A549 (cell line): ENCODE measurements at regions of chr15 and their contacts with region 1.

Region 1: DNA sequence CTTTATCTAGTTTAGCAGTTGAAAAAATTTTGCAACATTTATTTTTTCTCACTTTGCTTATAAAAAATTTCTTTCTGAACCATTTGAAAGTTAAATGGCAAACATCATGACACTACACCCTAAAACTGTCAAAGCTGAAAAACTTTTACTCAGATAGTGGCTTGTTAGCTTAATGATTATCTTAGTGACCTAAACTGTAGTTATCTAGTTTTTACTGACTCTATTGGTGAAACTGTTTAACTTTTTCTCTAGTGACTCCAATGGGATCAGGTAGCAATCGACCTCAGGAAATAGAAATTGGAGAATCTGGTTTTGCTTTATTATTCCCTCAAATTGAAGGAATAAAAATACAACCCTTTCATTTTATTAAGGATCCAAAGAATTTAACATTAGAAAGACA is 13.3 kb downstream of the FBXO22 start:
- DNase-seq: no peak
- ATAC-seq: no peak
- H3K4me3 ChIP-seq: no peak overlapping the region
- H3K27ac ChIP-seq: no peak overlapping the region
- H3K4me1 ChIP-seq: peaks cover 4% of the 10 kb centered on the region; the same call in 2 of the 3 replicates
- CTCF ChIP-seq: no peak
- EP300 ChIP-seq: no peak
- POLR2A ChIP-seq: no peak
- RAD21 ChIP-seq: no peak

Region 2: GRCh38 chr15:75928680-75929608 is 12.0 kb after region 1 on chr15:
- CTCF ChIA-PET with region 1: interaction called, 55 read pairs
- POLR2A ChIA-PET with region 1: no interaction called
- DNase-seq: peak; percentile 38 to 75
- ATAC-seq: peak; percentile 91 to 94
- H3K4me3 ChIP-seq: no peak overlapping the region
- H3K27ac ChIP-seq: no peak overlapping the region
- H3K4me1 ChIP-seq: peaks cover 9% of the 10 kb centered on the region; the same call in 2 of the 3 replicates
- CTCF ChIP-seq: peak; percentile 64
- EP300 ChIP-seq: no peak
- POLR2A ChIP-seq: no peak
- RAD21 ChIP-seq: peak; percentile 66 to 70

Region 3: DNA sequence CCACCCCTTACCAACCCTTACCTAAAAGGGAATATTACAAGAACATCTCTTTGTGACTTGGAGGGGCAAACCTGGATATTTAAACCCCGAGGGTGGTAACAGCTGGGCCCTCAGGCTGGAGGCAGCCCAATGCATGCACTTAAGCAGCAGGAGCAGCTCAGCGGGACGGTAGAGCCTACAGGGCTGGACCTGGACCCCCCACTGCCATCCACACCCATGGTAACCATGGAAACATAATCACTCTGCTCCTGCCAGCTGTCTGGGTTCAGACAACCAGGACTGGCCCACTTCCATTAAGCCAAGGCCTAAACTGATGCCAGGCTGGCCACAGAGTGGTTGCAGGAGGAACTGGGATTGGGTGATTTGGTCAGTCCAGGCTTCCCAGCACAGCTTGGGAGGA is 341.5 kb after region 1 on chr15:
- CTCF ChIA-PET with region 1: no interaction called
- POLR2A ChIA-PET with region 1: no interaction called
- DNase-seq: no peak
- ATAC-seq: peak in 1 of 2 experiments; percentile 48; a peak in 2 of 6 replicates
- H3K4me3 ChIP-seq: no peak overlapping the region
- H3K27ac ChIP-seq: no peak overlapping the region
- H3K4me1 ChIP-seq: no peaks in the 10 kb centered on the region
- CTCF ChIP-seq: no peak
- EP300 ChIP-seq: no peak
- POLR2A ChIP-seq: no peak
- RAD21 ChIP-seq: no peak